ENCODE measurements at regions of chr1 and their contacts with region 1.

Region 1: GRCh38 chr1:32870615-32871363 is at the start of gene FNDC5:
- DNase-seq: no peak
- ATAC-seq: peak; percentile 21; the same call in 1 of the 3 replicates
- H3K4me3 ChIP-seq: no peak within 1 kb of the TSS
- H3K27ac ChIP-seq: no peak within 1 kb of the TSS
- H3K4me1 ChIP-seq: peaks cover 4% of the 10 kb centered on the region
- H3K27me3 ChIP-seq: peaks cover 9 to 12% of the 10 kb centered on the region in 2 experiments; a peak in 3 of 4 replicates
- CTCF ChIP-seq: no peak
- EP300 ChIP-seq: no peak
- POLR2A ChIP-seq: no peak
- RAD21 ChIP-seq: no peak
- polyA plus RNA-seq, gene FNDC5: 0.14 to 0.26 TPM

Region 2: DNA sequence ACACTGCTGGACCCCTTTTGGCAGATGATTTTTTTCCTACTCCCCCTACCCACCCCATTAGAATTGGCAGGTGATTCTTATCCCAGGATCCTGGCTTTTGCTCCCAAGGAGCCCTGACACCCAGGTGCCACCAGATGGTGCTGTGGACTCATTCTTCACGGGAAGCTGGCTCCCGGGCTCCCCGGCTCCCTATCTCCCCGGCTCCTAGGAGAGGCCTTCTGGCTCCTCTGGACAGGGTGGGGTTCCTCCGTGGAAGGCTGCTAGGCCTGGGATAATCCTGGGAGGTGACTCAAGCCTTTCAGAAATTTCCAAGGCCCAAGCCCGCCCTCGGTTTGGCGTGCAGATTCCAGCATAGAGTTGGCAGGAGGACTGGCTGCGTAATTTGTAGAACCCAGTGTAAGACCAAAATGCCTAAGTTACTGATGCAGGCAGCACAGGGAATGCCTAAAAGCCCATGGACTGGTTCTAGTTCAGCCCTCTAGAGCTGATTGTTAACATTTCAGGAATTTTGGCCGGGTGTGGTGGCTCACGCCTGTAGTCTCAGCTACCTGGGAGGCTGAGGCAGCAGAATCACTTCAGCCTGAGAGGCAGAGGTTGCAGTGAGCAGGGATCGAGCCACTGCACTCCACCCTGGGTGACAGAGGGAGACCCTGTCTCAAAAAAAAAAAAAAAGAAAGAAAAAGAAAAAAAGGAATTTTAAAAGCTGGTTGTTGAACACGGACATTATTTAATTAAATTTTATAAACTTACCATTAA is 469.7 kb before region 1 on chr1:
- CTCF ChIA-PET with region 1: interaction called, 4 read pairs
- POLR2A ChIA-PET with region 1: no interaction called
- RAD21 ChIA-PET with region 1: interaction called, 3 read pairs
- SMC1A ChIA-PET with region 1: no interaction called
- in situ Hi-C with region 1: no loop called
- intact Hi-C with region 1: loop called (anchors 2 kb)
- DNase-seq: no peak
- ATAC-seq: peak; percentile 95
- H3K4me3 ChIP-seq: no peak overlapping the region
- H3K27ac ChIP-seq: no peak overlapping the region
- H3K4me1 ChIP-seq: no peaks in the 10 kb centered on the region
- H3K27me3 ChIP-seq: no peaks in the 10 kb centered on the region
- CTCF ChIP-seq: peak; percentile 87 to 94 (median 88)
- EP300 ChIP-seq: no peak
- POLR2A ChIP-seq: no peak
- RAD21 ChIP-seq: peak; percentile 81

Region 3: GRCh38 chr1:32536117-32536516 is 334.7 kb before region 1 on chr1:
- CTCF ChIA-PET with region 1: no interaction called
- POLR2A ChIA-PET with region 1: no interaction called
- RAD21 ChIA-PET with region 1: no interaction called
- SMC1A ChIA-PET with region 1: no interaction called
- in situ Hi-C with region 1: no loop called
- intact Hi-C with region 1: no loop called
- DNase-seq: no peak
- ATAC-seq: no peak
- H3K4me3 ChIP-seq: no peak overlapping the region
- H3K27ac ChIP-seq: no peak overlapping the region
- H3K4me1 ChIP-seq: no peaks in the 10 kb centered on the region
- H3K27me3 ChIP-seq: peaks cover 0 to 1% of the 10 kb centered on the region in 2 experiments; a peak in 2 of 4 replicates
- CTCF ChIP-seq: no peak
- EP300 ChIP-seq: no peak
- POLR2A ChIP-seq: no peak
- RAD21 ChIP-seq: no peak

Region 4: DNA sequence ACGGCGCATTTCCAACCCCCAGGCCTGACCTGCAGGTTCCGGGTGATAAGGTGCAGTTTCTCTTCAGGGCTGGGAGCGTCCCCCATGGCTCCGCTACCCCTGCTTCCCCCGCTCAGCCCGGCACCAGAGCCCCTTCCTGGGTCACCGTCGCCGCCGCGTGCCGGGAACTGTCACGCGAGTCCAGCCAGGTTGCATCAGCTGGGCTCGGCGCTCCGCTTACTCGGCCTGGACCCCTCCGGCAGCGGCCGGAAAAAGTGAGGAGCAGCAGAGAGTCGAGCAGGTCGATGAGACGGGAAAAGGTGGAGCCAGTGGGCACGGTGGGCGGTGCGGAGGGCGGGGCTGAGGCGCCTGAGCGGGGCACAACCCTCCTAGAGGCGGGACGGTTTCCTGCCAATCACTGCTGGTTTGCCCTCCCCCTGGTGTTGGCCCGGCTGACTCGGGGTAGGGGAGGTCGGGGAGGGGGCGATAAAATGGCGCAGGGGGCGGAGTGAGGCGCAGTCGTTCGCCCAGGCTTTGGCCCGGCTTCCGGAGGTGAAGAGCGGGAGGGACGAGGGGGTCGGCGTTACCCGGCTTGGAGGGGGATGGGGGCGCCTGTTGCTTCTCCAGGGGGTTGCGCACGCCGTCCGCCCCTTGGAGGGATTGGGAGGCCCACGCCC is 53.5 kb before region 1 on chr1 and contains the starts of genes S100PBP and YARS1:
- CTCF ChIA-PET with region 1: interaction called, 22 read pairs
- POLR2A ChIA-PET with region 1: interaction called, 11 read pairs
- RAD21 ChIA-PET with region 1: interaction called, 4 read pairs
- SMC1A ChIA-PET with region 1: interaction called, 5 read pairs
- in situ Hi-C with region 1: no loop called
- intact Hi-C with region 1: loop called (anchors 5 kb)
- DNase-seq: peak; percentile 93
- ATAC-seq: peak; percentile 88
- H3K4me3 ChIP-seq: peak within 1 kb of the TSS; percentile 90
- H3K27ac ChIP-seq: peak within 1 kb of the TSS; percentile 100
- H3K4me1 ChIP-seq: peaks cover 28% of the 10 kb centered on the region
- H3K27me3 ChIP-seq: no peaks in the 10 kb centered on the region
- CTCF ChIP-seq: no peak; a peak in 1 of 6 replicates
- EP300 ChIP-seq: peak; percentile 37 to 65; a peak in 2 of 4 replicates
- POLR2A ChIP-seq: peak; percentile 92
- RAD21 ChIP-seq: no peak
- polyA plus RNA-seq, gene S100PBP: 17.0 to 19.1 TPM
- polyA plus RNA-seq, gene YARS1: 39.9 to 66.4 TPM

Region 5: DNA sequence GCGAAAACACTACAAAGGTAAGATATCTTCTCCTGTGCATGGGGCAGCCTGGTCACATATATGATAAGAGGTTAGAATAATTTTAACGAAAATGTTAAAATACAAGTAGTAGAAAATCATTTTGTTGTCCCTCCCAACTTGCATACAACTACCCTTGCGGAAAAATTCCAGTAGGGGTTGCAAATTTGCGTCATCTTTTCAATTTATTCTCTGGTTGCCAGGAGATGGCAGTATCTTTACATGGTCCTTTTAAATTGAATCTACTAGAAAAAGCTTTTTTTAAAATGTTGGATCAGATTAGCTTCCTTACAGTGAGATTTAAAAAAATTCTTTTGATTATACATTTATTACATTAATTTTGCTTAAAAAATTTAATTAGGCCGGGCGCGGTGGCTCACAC is 42.4 kb before region 1 on chr1:
- CTCF ChIA-PET with region 1: interaction called, 23 read pairs
- POLR2A ChIA-PET with region 1: no interaction called
- RAD21 ChIA-PET with region 1: interaction called, 3 read pairs
- SMC1A ChIA-PET with region 1: interaction called, 4 read pairs
- in situ Hi-C with region 1: no loop called
- intact Hi-C with region 1: no loop called
- DNase-seq: no peak
- ATAC-seq: no peak
- H3K4me3 ChIP-seq: no peak overlapping the region
- H3K27ac ChIP-seq: no peak overlapping the region
- H3K4me1 ChIP-seq: no peaks in the 10 kb centered on the region
- H3K27me3 ChIP-seq: no peaks in the 10 kb centered on the region
- CTCF ChIP-seq: peak in 1 of 3 experiments; percentile 20; a peak in 1 of 6 replicates
- EP300 ChIP-seq: no peak
- POLR2A ChIP-seq: no peak
- RAD21 ChIP-seq: 0 out of 2 replicates have a peak, but pooled peaks have one; percentile 18

Region 6: GRCh38 chr1:32848354-32849063 is 22.3 kb before region 1 on chr1:
- CTCF ChIA-PET with region 1: interaction called, 10 read pairs
- POLR2A ChIA-PET with region 1: no interaction called
- RAD21 ChIA-PET with region 1: interaction called, 3 read pairs
- SMC1A ChIA-PET with region 1: interaction called, 15 read pairs
- in situ Hi-C with region 1: no loop called
- intact Hi-C with region 1: no loop called
- DNase-seq: no peak
- ATAC-seq: peak; percentile 95
- H3K4me3 ChIP-seq: no peak overlapping the region
- H3K27ac ChIP-seq: 0 out of 2 replicates have a peak overlapping the region, but pooled peaks have one; percentile 6
- H3K4me1 ChIP-seq: no peaks in the 10 kb centered on the region
- H3K27me3 ChIP-seq: no peaks in the 10 kb centered on the region
- CTCF ChIP-seq: no peak
- EP300 ChIP-seq: no peak
- POLR2A ChIP-seq: no peak
- RAD21 ChIP-seq: no peak

Region 7: DNA sequence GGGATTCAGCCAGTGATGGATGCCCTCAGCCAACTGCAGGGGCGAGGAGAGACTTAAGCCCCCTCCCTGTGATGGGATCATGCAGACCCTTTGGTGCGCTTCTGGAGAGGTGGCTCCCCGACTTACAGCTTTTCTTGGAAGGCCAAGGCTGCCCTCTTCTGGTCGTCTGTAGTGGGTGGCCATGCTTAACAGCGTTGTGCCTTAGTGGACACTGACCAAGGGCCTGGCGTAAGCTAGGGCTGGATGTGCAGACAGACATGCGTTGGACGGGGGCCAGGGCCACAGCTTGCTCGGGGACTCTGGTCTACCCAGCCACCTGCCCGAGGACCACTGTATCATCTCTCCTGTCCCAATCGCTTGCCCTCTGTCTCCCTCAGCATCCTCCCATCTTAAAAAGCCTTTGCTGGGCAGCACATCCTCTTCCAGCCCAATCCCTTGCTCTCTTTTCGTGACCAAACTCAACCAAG is 215.6 kb after region 1 on chr1:
- CTCF ChIA-PET with region 1: interaction called, 45 read pairs
- POLR2A ChIA-PET with region 1: no interaction called
- RAD21 ChIA-PET with region 1: interaction called, 13 read pairs
- SMC1A ChIA-PET with region 1: interaction called, 11 read pairs
- in situ Hi-C with region 1: no loop called
- intact Hi-C with region 1: no loop called
- DNase-seq: peak; percentile 5
- ATAC-seq: peak; percentile 90
- H3K4me3 ChIP-seq: no peak overlapping the region
- H3K27ac ChIP-seq: no peak overlapping the region
- H3K4me1 ChIP-seq: peaks cover 14% of the 10 kb centered on the region
- H3K27me3 ChIP-seq: peaks cover 8 to 12% of the 10 kb centered on the region in 2 experiments
- CTCF ChIP-seq: peak; percentile 74 to 83 (median 75)
- EP300 ChIP-seq: no peak
- POLR2A ChIP-seq: no peak
- RAD21 ChIP-seq: peak; percentile 82

Measured in GM12878 (cell line).